Ascending aorta (tissue), 2 donors: ENCODE measurements at regions of chr20 and their contacts with region 1.

Region 1: DNA sequence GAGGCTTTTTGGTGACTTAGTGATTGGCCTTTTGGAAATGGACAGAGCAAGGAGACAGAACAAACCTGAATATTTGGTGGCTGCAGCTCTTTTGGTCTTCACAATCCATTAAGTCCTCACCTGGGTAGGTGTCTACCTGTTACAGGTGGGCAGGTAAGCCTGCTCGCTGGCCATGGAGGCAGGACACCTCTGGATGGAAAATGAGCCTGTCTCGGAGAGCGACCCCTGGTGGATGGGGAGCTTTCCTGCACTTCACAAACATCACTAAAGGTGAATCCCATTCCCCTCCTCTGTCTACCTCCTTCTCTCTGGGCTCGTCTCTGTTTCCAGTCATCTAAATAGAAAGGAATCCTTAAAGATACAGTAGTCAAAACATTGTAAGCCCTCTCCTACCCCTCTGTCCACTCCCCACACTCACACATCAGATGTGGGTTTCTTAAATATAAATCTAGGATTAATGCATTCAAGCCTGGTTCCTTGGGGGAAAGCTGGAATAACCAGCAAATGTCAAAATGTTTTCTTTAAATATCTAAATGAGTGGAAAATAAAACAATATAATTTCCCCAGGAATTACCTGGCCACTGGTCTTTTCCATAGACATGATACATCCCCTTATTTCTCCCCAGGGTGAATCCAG is 304.9 kb downstream of the CDH26 start:
- DNase-seq: no peak
- H3K4me3 ChIP-seq: no peak overlapping the region
- H3K27ac ChIP-seq: no peak overlapping the region
- H3K4me1 ChIP-seq: no peaks in the 10 kb centered on the region
- H3K27me3 ChIP-seq: no peaks in the 10 kb centered on the region
- CTCF ChIP-seq: peak; percentile 22 to 48 (median 30)

Region 2: DNA sequence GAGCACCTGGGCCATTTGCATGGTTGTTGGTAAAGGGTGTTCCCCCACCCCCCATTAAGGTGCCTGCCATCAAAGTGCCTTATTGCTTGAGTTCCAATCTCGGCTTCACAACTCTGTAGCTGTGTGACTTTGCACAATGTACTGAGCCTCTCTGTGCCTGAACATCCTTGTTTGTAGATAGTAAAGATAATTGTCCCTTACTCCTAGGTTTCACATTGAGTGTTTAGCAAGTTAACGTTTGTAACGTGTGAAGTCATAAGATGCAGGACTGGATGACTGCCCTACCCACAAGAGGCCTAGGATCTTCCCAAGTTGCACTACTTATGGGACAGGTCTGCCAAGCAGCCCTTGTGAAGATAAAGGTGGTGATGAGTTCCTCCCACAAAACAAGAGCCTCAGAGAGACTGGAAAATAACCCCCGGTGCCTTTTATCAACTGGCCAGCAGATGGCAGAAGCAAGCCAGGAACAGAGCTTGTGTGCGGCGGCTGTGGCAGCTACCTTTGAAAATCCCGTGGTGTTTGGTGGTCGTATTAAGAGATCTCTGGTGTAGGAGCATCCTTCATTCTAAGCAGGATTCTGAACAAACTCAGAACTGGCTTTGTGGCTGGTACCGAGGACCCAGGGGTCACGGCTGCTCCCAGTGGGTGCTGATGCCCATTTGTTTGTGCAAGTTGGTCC is 205.8 kb before region 1 on chr20:
- intact Hi-C with region 1: loop called (anchors 2 kb)
- DNase-seq: peak in 1 of 2 donors; percentile 70
- H3K4me3 ChIP-seq: no peak overlapping the region
- H3K27ac ChIP-seq: no peak overlapping the region
- H3K4me1 ChIP-seq: peaks cover 0 to 5% of the 10 kb centered on the region in 2 donors
- H3K27me3 ChIP-seq: no peaks in the 10 kb centered on the region
- CTCF ChIP-seq: peak; percentile 64 to 85 (median 74)